ENCODE measurements at regions of chr16 and their contacts with region 1.

Region 1: GRCh38 chr16:4350787-4351659 is at the start of gene PAM16:
- DNase-seq: peak; percentile 91
- ATAC-seq: peak; percentile 96
- H3K4me3 ChIP-seq: peak within 1 kb of the TSS; percentile 86
- H3K27ac ChIP-seq: peak within 1 kb of the TSS; percentile 82
- H3K4me1 ChIP-seq: peaks cover 5% of the 10 kb centered on the region
- H3K27me3 ChIP-seq: no peaks in the 10 kb centered on the region
- CTCF ChIP-seq: no peak
- POLR2A ChIP-seq: peak; percentile 30; the same call in 1 of the 2 replicates
- RAD21 ChIP-seq: no peak
- total RNA-seq, gene PAM16: 17.9 and 25.6 TPM in 2 replicates

Region 2: GRCh38 chr16:4315186-4316109 is 35.6 kb before region 1 on chr16 and contains the start of gene GLIS2:
- CTCF ChIA-PET with region 1: no interaction called
- POLR2A ChIA-PET with region 1: no interaction called
- dilution Hi-C with region 1: no loop called
- in situ Hi-C with region 1: no loop called
- intact Hi-C with region 1: loop called (anchors 2 kb)
- DNase-seq: peak; percentile 82
- ATAC-seq: peak; percentile 82
- H3K4me3 ChIP-seq: peak within 1 kb of the TSS; percentile 74
- H3K27ac ChIP-seq: peak within 1 kb of the TSS; percentile 73
- H3K4me1 ChIP-seq: peaks cover 22% of the 10 kb centered on the region
- H3K27me3 ChIP-seq: no peaks in the 10 kb centered on the region
- CTCF ChIP-seq: no peak
- POLR2A ChIP-seq: no peak
- RAD21 ChIP-seq: no peak
- total RNA-seq, gene GLIS2: 0.36 and 0.56 TPM in 2 replicates

Region 3: DNA sequence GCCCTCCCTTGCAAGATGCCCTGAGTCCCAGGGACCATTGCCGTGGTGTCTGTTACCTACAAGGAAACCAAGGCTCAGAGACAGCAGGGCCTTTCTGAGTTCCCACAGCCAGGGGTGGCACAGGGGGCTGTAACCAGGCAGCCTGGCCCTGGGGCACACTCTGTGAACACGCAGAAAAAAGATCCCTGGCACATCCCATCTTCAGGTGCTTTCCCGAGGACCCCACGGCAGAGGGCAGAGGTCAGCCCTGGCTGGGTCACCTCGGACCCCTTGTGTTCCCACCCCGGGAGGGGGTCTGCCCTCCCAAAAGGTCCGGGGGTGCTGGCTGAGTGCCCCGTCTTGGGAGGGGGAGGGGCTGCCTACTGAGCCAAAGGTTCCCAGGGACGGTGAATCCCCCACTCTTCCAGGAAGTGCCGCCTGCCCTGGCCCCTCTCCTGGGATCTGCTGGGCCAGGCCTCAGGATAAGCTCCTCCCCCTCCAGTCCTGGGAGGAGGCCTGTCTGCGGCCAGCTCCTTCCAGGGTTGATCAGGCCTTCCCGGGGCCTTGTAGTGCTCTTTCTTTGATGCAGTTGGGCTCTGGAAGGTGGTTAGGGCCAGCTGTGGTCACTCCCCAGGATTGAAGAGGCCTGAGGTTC is 27.1 kb before region 1 on chr16:
- CTCF ChIA-PET with region 1: no interaction called
- POLR2A ChIA-PET with region 1: no interaction called
- dilution Hi-C with region 1: no loop called
- in situ Hi-C with region 1: no loop called
- intact Hi-C with region 1: loop called (anchors 2 kb)
- DNase-seq: peak; percentile 42
- ATAC-seq: peak; percentile 73
- H3K4me3 ChIP-seq: no peak overlapping the region
- H3K27ac ChIP-seq: peak overlapping the region; percentile 45
- H3K4me1 ChIP-seq: peaks cover 26% of the 10 kb centered on the region
- H3K27me3 ChIP-seq: no peaks in the 10 kb centered on the region
- CTCF ChIP-seq: no peak
- POLR2A ChIP-seq: no peak
- RAD21 ChIP-seq: no peak

Region 4: GRCh38 chr16:4392382-4393239 is 41.6 kb after region 1 on chr16:
- CTCF ChIA-PET with region 1: no interaction called
- POLR2A ChIA-PET with region 1: no interaction called
- dilution Hi-C with region 1: no loop called
- in situ Hi-C with region 1: no loop called
- intact Hi-C with region 1: loop called (anchors 2 kb)
- DNase-seq: peak; percentile 86
- ATAC-seq: peak; percentile 64
- H3K4me3 ChIP-seq: no peak overlapping the region
- H3K27ac ChIP-seq: peak overlapping the region; percentile 57
- H3K4me1 ChIP-seq: peaks cover 33% of the 10 kb centered on the region
- H3K27me3 ChIP-seq: no peaks in the 10 kb centered on the region
- CTCF ChIP-seq: no peak
- POLR2A ChIP-seq: no peak
- RAD21 ChIP-seq: no peak

Region 5: GRCh38 chr16:4475880-4476788 is 125.1 kb after region 1 on chr16 and contains the start of gene HMOX2:
- CTCF ChIA-PET with region 1: no interaction called
- POLR2A ChIA-PET with region 1: no interaction called
- dilution Hi-C with region 1: no loop called
- in situ Hi-C with region 1: no loop called
- intact Hi-C with region 1: no loop called
- DNase-seq: peak; percentile 86
- ATAC-seq: peak; percentile 94
- H3K4me3 ChIP-seq: peak within 1 kb of the TSS; percentile 86
- H3K27ac ChIP-seq: peak within 1 kb of the TSS; percentile 53
- H3K4me1 ChIP-seq: peaks cover 2% of the 10 kb centered on the region; the same call in 1 of the 2 replicates
- H3K27me3 ChIP-seq: no peaks in the 10 kb centered on the region
- CTCF ChIP-seq: peak; percentile 48
- POLR2A ChIP-seq: peak; percentile 59; the same call in 1 of the 2 replicates
- RAD21 ChIP-seq: no peak
- total RNA-seq, gene HMOX2: 91.1 and 98.8 TPM in 2 replicates

Region 6: GRCh38 chr16:5851393-5851982 is 1500.5 kb after region 1 on chr16:
- CTCF ChIA-PET with region 1: no interaction called
- POLR2A ChIA-PET with region 1: no interaction called
- dilution Hi-C with region 1: no loop called
- in situ Hi-C with region 1: no loop called
- intact Hi-C with region 1: no loop called
- DNase-seq: no peak
- ATAC-seq: no peak
- H3K4me3 ChIP-seq: no peak overlapping the region
- H3K27ac ChIP-seq: no peak overlapping the region
- H3K4me1 ChIP-seq: no peaks in the 10 kb centered on the region
- H3K27me3 ChIP-seq: no peaks in the 10 kb centered on the region
- CTCF ChIP-seq: no peak
- POLR2A ChIP-seq: no peak
- RAD21 ChIP-seq: no peak

Measured in IMR-90 (cell line).